ENCODE measurements at regions of chr5 and their contacts with region 1.

Region 1: DNA sequence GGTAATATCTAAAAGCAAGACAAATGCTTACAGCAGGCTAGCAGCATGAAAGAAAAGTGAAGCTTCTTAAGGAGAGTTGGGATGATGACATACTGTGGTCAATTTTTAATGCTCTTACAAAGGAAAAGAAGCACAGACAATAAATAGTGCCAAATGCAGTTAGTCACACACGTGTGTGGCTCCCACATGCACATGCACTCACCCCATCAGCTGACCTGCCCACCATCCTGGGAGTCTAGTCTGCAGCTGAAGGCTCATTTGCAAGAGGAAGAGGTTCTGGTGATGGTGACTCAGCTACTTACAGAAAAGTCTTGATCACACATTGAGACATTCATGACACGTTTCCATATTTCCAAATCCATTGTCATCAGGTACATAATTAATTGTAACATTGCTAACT is 129.3 kb downstream of the MRPL36 start:
- DNase-seq: no peak
- ATAC-seq: no peak
- H3K4me3 ChIP-seq: no peak overlapping the region
- H3K27ac ChIP-seq: no peak overlapping the region
- H3K4me1 ChIP-seq: peaks cover 6% of the 10 kb centered on the region in 2 experiments; a peak in 3 of 4 replicates
- H3K27me3 ChIP-seq: peaks cover 6% of the 10 kb centered on the region; the same call in 1 of the 2 replicates
- CTCF ChIP-seq: no peak
- POLR2A ChIP-seq: no peak
- RAD21 ChIP-seq: no peak

Region 2: DNA sequence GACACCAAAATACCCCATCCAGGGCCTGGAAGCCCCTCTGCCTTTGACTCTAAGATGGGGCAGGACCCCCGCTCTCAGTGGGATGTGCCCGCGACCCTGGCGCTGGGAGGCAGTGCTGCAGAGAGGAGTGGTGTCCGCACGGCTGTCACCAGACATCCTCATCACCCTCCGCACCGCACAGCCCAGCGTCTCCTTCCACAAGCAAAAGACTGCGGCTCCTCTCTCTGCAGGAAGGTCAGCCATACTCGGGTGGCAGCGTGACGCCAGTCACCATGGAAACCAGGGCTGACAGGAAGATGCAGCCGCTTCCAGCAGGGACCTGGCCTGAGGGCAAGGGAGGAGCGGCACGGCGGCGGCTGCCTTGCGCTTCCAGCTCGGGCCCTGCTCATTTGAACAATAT is 208.0 kb before region 1 on chr5:
- CTCF ChIA-PET with region 1: no interaction called
- POLR2A ChIA-PET with region 1: no interaction called
- RAD21 ChIA-PET with region 1: no interaction called
- intact Hi-C with region 1: no loop called
- DNase-seq: no peak
- ATAC-seq: no peak
- H3K4me3 ChIP-seq: no peak overlapping the region
- H3K27ac ChIP-seq: no peak overlapping the region
- H3K4me1 ChIP-seq: no peaks in the 10 kb centered on the region
- H3K27me3 ChIP-seq: no peaks in the 10 kb centered on the region
- CTCF ChIP-seq: no peak
- POLR2A ChIP-seq: no peak
- RAD21 ChIP-seq: no peak

Region 3: GRCh38 chr5:1685066-1685465 is 14.7 kb after region 1 on chr5:
- CTCF ChIA-PET with region 1: no interaction called
- POLR2A ChIA-PET with region 1: no interaction called
- RAD21 ChIA-PET with region 1: no interaction called
- intact Hi-C with region 1: no loop called
- DNase-seq: no peak
- ATAC-seq: no peak
- H3K4me3 ChIP-seq: no peak overlapping the region
- H3K27ac ChIP-seq: no peak overlapping the region
- H3K4me1 ChIP-seq: no peaks in the 10 kb centered on the region
- H3K27me3 ChIP-seq: peaks cover 28% of the 10 kb centered on the region; the same call in 1 of the 2 replicates
- CTCF ChIP-seq: no peak
- POLR2A ChIP-seq: no peak
- RAD21 ChIP-seq: no peak

Region 4: DNA sequence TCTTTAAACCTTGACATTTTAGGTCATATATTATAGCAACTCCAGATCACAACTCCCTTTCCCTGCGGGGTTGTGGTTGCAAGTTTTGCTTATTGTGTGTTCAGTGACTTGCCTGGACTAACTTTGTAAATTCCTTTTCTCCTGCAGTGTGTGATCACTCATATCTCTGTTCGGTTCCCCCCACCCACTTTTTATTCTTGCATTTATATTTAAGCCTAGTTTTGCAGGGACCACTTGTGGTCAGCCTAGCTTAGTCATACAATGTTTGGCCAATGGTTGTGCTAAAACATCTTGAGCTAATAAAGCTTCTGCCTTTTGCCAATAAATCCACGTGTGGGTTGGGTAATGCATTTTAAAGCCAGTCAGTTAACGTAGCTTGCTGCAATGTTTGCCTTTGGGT is 358.9 kb after region 1 on chr5:
- CTCF ChIA-PET with region 1: no interaction called
- POLR2A ChIA-PET with region 1: no interaction called
- RAD21 ChIA-PET with region 1: no interaction called
- intact Hi-C with region 1: loop called (anchors 10 kb)
- DNase-seq: no peak
- ATAC-seq: no peak
- H3K4me3 ChIP-seq: no peak overlapping the region
- H3K27ac ChIP-seq: no peak overlapping the region
- H3K4me1 ChIP-seq: no peaks in the 10 kb centered on the region
- H3K27me3 ChIP-seq: peaks cover 75% of the 10 kb centered on the region
- CTCF ChIP-seq: no peak
- POLR2A ChIP-seq: no peak
- RAD21 ChIP-seq: no peak

Region 5: GRCh38 chr5:2052687-2053086 is 382.3 kb after region 1 on chr5:
- CTCF ChIA-PET with region 1: no interaction called
- POLR2A ChIA-PET with region 1: no interaction called
- RAD21 ChIA-PET with region 1: no interaction called
- intact Hi-C with region 1: no loop called
- DNase-seq: no peak
- ATAC-seq: peak; percentile 53; the same call in 1 of the 2 replicates
- H3K4me3 ChIP-seq: no peak overlapping the region
- H3K27ac ChIP-seq: no peak overlapping the region
- H3K4me1 ChIP-seq: no peaks in the 10 kb centered on the region
- H3K27me3 ChIP-seq: peaks cover 67% of the 10 kb centered on the region
- CTCF ChIP-seq: peak in 2 of 3 experiments; percentile 4 to 18; a peak in 1 of 6 replicates
- POLR2A ChIP-seq: no peak
- RAD21 ChIP-seq: no peak

Region 6: DNA sequence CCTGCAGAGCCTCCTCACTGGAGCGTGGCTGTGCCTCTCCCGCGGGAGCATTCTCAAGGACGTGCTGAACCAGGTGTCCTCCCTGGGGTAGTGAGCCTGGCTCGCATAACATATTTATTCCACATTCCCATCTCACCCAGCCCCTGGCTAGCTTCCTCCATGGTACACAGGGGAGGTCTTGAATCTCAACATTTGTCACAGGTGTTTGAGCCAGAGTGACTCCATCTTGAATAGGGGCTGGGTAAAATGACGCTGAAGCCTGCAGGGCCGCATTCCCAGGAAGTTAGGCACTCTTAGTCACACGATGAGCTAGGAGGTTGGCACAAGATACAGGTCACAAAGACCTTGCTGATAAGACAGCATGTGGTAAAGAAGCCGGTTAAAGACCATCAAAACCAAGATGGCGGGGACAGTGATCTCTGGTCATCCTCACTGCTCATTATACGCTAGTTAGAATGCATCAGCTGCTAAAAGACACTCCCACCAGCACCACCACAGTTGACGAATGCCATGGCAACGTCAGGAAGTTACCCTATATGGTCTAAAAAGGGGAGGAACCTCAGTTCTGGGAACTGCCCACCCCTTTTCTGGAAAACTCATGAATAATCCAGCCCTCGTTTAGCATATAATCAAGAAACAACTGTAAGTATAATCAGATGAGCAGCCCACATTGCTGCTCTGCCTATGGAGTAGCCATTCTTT is 486.2 kb after region 1 on chr5:
- CTCF ChIA-PET with region 1: no interaction called
- POLR2A ChIA-PET with region 1: no interaction called
- RAD21 ChIA-PET with region 1: no interaction called
- intact Hi-C with region 1: loop called (anchors 10 kb)
- DNase-seq: no peak
- ATAC-seq: no peak
- H3K4me3 ChIP-seq: no peak overlapping the region
- H3K27ac ChIP-seq: no peak overlapping the region
- H3K4me1 ChIP-seq: peaks cover 0 to 5% of the 10 kb centered on the region in 2 experiments; a peak in 1 of 4 replicates
- H3K27me3 ChIP-seq: peaks cover 11% of the 10 kb centered on the region
- CTCF ChIP-seq: no peak
- POLR2A ChIP-seq: no peak
- RAD21 ChIP-seq: no peak

Measured in HCT116 (cell line).